ENCODE measurements at regions of chr3 and their contacts with region 1.

Region 1: GRCh38 chr3:116939106-116939505 is 229.5 kb downstream of the TUSC7 start:
- DNase-seq: no peak
- ATAC-seq: no peak
- H3K4me3 ChIP-seq: no peak overlapping the region
- H3K27ac ChIP-seq: no peak overlapping the region
- H3K4me1 ChIP-seq: no peaks in the 10 kb centered on the region
- H3K27me3 ChIP-seq: no peaks in the 10 kb centered on the region
- CTCF ChIP-seq: no peak
- POLR2A ChIP-seq: no peak
- RAD21 ChIP-seq: no peak

Region 2: GRCh38 chr3:116966649-116967048 is 27.5 kb after region 1 on chr3:
- CTCF ChIA-PET with region 1: no interaction called
- POLR2A ChIA-PET with region 1: no interaction called
- RAD21 ChIA-PET with region 1: no interaction called
- intact Hi-C with region 1: loop called (anchors 1 kb)
- DNase-seq: no peak
- ATAC-seq: no peak
- H3K4me3 ChIP-seq: no peak overlapping the region
- H3K27ac ChIP-seq: no peak overlapping the region
- H3K4me1 ChIP-seq: no peaks in the 10 kb centered on the region
- H3K27me3 ChIP-seq: no peaks in the 10 kb centered on the region
- CTCF ChIP-seq: no peak
- POLR2A ChIP-seq: no peak
- RAD21 ChIP-seq: no peak

Measured in HCT116 (cell line).